ENCODE measurements at regions of chr11 and their contacts with region 1.

Region 1: GRCh38 chr11:95231127-95231880 is at the start of gene SESN3:
- DNase-seq: peak; percentile 99
- H3K4me3 ChIP-seq: peak within 1 kb of the TSS; percentile 83
- H3K27ac ChIP-seq: peak within 1 kb of the TSS; percentile 61
- H3K4me1 ChIP-seq: peaks cover 35% of the 10 kb centered on the region
- CTCF ChIP-seq: peak; percentile 51; the same call in 1 of the 2 replicates
- total RNA-seq, gene SESN3: 3.4 and 4.4 TPM in 2 replicates

Region 2: DNA sequence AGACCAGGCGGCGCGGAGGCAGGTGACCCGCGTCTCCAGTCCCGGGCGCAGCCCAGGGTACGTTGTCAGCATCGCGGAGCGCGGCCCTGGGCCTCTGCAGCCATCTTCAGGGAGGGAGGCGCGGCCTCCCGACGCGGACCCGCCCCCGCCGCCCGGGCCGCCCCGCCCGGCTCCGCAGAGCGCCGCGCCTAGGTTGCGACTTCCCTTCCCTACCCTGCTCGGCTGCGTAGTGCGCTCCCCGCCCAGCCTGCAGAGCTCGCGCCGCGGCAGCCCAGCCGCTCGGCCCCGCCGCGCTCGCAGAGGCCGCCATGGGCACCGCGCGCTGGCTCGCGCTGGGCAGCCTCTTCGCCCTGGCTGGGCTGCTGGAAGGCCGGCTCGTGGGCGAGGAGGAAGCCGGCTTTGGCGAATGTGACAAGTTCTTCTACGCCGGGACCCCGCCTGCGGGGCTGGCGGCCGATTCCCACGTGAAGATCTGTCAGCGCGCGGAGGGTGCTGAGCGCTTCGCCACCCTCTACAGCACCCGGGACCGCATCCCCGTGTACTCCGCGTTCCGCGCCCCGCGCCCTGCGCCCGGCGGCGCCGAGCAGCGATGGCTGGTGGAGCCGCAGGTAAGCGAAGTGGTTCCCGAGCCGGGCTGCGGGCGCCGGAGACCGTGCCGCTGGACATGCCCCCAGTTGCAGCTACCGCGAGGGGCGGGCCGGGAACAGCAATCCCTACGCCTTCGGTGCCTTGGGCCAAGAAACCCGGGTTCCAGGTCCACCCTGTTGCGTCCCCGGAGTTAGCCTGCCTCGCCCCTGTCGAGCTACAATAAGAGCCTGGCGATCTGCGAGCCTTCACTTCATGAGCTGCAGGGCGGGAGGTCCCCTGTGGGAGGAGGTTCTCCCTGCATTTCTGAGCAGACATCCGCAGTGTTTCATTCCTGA is 141.4 kb before region 1 on chr11 and contains the start of gene ENDOD1:
- CTCF ChIA-PET with region 1: no interaction called
- POLR2A ChIA-PET with region 1: interaction called, 7 read pairs
- intact Hi-C with region 1: loop called (anchors 5 kb)
- DNase-seq: peak; percentile 88
- H3K4me3 ChIP-seq: peak within 1 kb of the TSS; percentile 82
- H3K27ac ChIP-seq: peak within 1 kb of the TSS; percentile 47
- H3K4me1 ChIP-seq: peaks cover 55% of the 10 kb centered on the region
- CTCF ChIP-seq: 0 out of 2 replicates have a peak, but pooled peaks have one; percentile 10
- total RNA-seq, gene ENDOD1: 18.5 and 20.4 TPM in 2 replicates

Region 3: GRCh38 chr11:95212609-95213008 is 18.7 kb before region 1 on chr11:
- CTCF ChIA-PET with region 1: no interaction called
- POLR2A ChIA-PET with region 1: interaction called, 36 read pairs
- intact Hi-C with region 1: no loop called
- DNase-seq: no peak
- H3K4me3 ChIP-seq: no peak overlapping the region
- H3K27ac ChIP-seq: no peak overlapping the region
- H3K4me1 ChIP-seq: peaks cover 8% of the 10 kb centered on the region
- CTCF ChIP-seq: no peak

Region 4: DNA sequence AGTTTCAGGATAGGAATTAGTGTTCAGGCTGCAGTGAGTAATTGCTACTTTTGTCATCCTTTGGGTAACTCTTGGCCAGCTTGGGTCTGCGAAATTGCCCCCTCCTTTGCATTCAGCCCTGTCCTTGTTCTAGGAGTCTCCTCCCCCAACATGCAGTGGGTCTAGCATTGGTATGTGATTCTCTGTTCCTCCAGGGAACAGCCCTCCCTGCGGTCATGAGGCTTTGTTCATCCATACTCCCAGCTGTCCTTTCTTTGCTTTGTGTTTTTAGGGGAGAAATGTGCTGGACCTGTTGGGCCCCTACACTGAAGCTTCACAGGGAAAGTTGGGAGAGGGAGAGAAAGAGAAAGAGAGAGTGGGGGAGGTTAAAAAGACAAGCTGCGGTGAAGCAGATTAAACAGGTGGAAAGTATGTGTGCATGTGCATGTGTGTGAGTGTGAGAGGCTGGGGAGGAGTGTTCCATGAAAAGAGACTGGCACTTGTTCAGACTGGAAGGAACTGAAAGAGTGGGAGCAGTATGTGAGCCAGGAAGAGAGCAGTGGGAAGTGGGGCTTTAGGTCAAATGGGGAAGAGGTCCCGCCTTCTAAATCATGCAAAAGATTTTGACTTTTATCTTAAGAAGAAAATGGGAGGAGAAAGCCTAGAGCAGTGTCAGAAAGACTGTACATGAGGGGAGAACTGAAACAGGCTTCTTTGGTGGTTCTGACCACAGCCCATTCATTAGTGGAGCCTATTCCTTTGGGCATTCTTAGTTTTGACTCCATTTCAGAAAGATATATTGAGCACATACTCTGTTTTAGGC is 17.6 kb after region 1 on chr11:
- CTCF ChIA-PET with region 1: interaction called, 24 read pairs
- POLR2A ChIA-PET with region 1: interaction called, 122 read pairs
- intact Hi-C with region 1: loop called (anchors 1 kb)
- DNase-seq: peak; percentile 46
- H3K4me3 ChIP-seq: peak overlapping the region; percentile 53
- H3K27ac ChIP-seq: peak overlapping the region; percentile 38
- H3K4me1 ChIP-seq: peaks cover 45% of the 10 kb centered on the region
- CTCF ChIP-seq: no peak

Region 5: GRCh38 chr11:95296621-95297025 is 65.3 kb after region 1 on chr11:
- CTCF ChIA-PET with region 1: interaction called, 13 read pairs
- POLR2A ChIA-PET with region 1: interaction called, 7 read pairs
- intact Hi-C with region 1: no loop called
- DNase-seq: peak; percentile 75
- H3K4me3 ChIP-seq: peak overlapping the region; percentile 38
- H3K27ac ChIP-seq: peak overlapping the region; percentile 5
- H3K4me1 ChIP-seq: peaks cover 24% of the 10 kb centered on the region
- CTCF ChIP-seq: no peak

Region 6: DNA sequence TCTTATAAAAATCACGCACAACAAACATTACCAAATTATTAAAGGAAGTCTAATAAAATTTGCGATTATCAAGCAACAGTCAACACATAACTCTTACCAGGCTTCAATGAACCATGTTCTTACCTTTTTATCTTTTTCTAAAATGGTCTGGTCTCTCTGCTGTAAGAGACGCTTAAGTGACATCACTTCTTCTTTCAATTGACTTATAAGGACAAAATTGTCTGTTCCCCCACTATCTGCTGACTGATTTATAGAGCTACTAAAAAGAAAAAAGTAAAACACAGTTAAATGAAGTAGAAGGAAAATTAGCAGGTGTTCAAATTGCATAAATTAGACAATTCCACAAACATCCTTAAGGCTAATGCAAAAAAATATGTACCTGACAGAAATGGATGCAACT is 547.4 kb after region 1 on chr11:
- CTCF ChIA-PET with region 1: no interaction called
- POLR2A ChIA-PET with region 1: interaction called, 3 read pairs
- intact Hi-C with region 1: loop called (anchors 10 kb)
- DNase-seq: no peak
- H3K4me3 ChIP-seq: no peak overlapping the region
- H3K27ac ChIP-seq: no peak overlapping the region
- H3K4me1 ChIP-seq: peaks cover 16% of the 10 kb centered on the region
- CTCF ChIP-seq: no peak

Measured in OCI-LY7 (cell line).